ENCODE measurements at regions of chr12 and their contacts with region 1.

Region 1: GRCh38 chr12:30985814-30986452 is 59.4 kb downstream of the TSPAN11 start:
- DNase-seq: peak in 4 of 5 donors; percentile 75 to 80 (median 79)
- H3K4me3 ChIP-seq: no peak overlapping the region
- H3K27ac ChIP-seq: no peak overlapping the region
- H3K4me1 ChIP-seq: no peaks in the 10 kb centered on the region
- H3K27me3 ChIP-seq: no peaks in the 10 kb centered on the region
- CTCF ChIP-seq: peak; percentile 70

Region 2: GRCh38 chr12:30764251-30764650 is 221.7 kb before region 1 on chr12:
- intact Hi-C with region 1: no loop called
- DNase-seq: no peak
- H3K4me3 ChIP-seq: no peak overlapping the region
- H3K27ac ChIP-seq: no peak overlapping the region
- H3K4me1 ChIP-seq: no peaks in the 10 kb centered on the region
- H3K27me3 ChIP-seq: no peaks in the 10 kb centered on the region
- CTCF ChIP-seq: no peak

Region 3: GRCh38 chr12:30850684-30851083 is 135.2 kb before region 1 on chr12:
- intact Hi-C with region 1: loop called (anchors 10 kb)
- DNase-seq: no peak
- H3K4me3 ChIP-seq: no peak overlapping the region
- H3K27ac ChIP-seq: no peak overlapping the region
- H3K4me1 ChIP-seq: no peaks in the 10 kb centered on the region
- H3K27me3 ChIP-seq: no peaks in the 10 kb centered on the region
- CTCF ChIP-seq: no peak

Measured in kidney (tissue), 22 donors.